ENCODE measurements at regions of chr18 and their contacts with region 1.

Region 1: GRCh38 chr18:45967007-45967706 is at the start of gene EPG5:
- DNase-seq: peak; percentile 98
- total RNA-seq, gene EPG5: 20.1 to 20.2 TPM

Region 2: DNA sequence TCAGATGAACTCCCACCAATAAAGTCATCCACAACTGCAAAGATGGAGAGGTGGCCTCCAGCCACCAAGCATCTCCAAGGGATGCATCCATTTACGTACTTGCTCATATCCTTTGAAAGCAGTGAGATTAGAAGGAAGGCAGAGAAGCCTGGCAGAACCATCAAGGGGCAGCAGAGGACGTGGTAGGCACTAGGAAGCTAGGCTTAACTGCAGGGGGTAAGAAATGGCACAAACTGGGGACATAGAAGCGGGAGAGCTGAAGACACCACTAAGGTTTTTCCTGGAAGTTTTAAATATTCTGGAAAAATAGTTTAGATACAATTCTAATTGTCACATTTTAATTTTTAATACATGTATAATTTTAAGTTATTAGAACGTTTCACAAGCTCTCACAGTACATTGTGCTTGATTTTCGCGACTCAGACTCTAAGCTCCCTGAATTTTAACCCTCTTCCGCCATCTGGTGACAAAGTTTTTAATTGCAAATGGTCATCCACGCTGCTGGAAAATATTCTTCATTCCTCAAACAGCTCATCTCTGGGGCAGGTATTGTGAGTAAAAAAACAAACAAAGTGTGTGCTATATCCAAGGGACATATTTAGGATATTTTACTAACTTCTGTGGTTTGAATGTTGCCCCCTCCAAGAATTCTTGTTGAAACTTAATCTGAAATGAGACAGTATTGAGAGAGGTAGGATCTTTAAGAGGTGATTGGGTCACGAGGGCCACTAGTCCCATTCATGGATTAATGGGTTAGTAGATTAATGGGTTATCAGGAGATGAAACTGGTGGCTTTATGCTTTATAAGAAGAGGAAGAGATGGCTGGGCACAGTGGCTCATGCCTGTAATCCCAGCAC is 106.5 kb after region 1 on chr18:
- intact Hi-C with region 1: loop called in 1 of 2 experiments (anchors 5 kb)
- DNase-seq: no peak